OCI-LY7 (cell line): ENCODE measurements at regions of chr11 and their contacts with region 1.

Region 1: GRCh38 chr11:22625448-22626287 is at the start of gene FANCF:
- DNase-seq: peak; percentile 99
- H3K4me3 ChIP-seq: peak within 1 kb of the TSS; percentile 84
- H3K27ac ChIP-seq: peak within 1 kb of the TSS; percentile 73
- H3K4me1 ChIP-seq: peaks cover 17% of the 10 kb centered on the region
- CTCF ChIP-seq: no peak
- total RNA-seq, gene FANCF: 14.5 and 22.2 TPM in 2 replicates

Region 2: DNA sequence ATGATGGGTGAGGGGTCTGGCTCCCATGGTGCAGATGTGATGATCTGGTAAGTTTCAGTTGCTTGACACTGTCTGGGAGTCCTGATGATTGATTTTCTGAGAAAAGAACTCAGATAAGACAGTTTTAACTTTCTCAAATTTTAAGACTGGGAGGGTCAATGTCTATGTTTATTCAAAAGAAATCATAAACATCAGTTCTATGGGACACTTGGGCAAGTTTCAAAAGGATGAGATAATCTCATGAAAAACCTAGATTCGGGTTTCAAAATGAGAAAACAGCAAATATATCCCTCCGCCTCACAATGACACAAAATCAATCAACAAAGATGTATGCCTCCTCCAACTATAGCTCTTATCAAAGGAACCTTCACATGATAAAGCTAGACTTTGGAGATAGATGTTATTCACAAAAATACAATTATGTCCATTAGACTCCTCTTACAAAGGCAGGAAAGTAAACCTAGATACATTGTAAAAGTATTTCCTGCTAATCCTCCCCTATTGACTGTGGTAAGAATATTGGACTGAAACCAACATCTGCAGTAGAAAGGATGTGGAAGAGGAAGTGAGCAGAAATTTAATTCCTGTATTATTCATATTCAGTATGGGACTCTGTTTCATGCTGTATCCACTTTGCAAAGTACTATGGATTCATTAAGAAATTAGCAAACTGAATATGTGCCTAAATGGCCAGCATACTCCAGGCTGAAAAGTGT is 182.3 kb after region 1 on chr11:
- CTCF ChIA-PET with region 1: no interaction called
- POLR2A ChIA-PET with region 1: no interaction called
- intact Hi-C with region 1: loop called (anchors 5 kb)
- DNase-seq: peak; percentile 55
- H3K4me3 ChIP-seq: no peak overlapping the region
- H3K27ac ChIP-seq: peak overlapping the region; percentile 28
- H3K4me1 ChIP-seq: peaks cover 20% of the 10 kb centered on the region
- CTCF ChIP-seq: no peak

Region 3: GRCh38 chr11:22846726-22847125 is 221.1 kb after region 1 on chr11:
- CTCF ChIA-PET with region 1: no interaction called
- POLR2A ChIA-PET with region 1: no interaction called
- intact Hi-C with region 1: no loop called
- DNase-seq: no peak
- H3K4me3 ChIP-seq: no peak overlapping the region
- H3K27ac ChIP-seq: no peak overlapping the region
- H3K4me1 ChIP-seq: no peaks in the 10 kb centered on the region
- CTCF ChIP-seq: no peak